ENCODE measurements at regions of chr14 and their contacts with region 1.

Region 1: DNA sequence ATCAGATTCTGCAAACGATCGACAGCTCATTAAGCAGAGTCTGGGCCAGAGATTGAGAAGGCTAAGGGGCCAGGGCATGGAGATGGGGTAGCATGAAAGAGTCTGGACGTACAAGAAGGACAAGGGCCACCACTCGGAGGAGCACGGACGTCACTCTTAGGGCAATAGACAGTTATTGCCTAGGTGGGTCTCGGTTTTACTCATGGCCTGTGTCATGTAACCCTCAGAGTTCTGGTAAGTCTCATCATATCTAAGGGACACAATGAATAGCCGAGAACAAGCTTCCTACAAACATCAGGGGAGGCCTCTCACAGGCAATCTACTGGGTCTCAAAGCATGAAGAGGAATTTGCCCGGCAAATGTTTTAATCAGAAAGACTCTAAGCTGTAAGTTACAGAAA is 30.4 kb upstream of the ITPK1 start:
- DNase-seq: no peak
- ATAC-seq: peak; percentile 85
- H3K4me3 ChIP-seq: no peak overlapping the region
- H3K27ac ChIP-seq: no peak overlapping the region
- H3K4me1 ChIP-seq: peaks cover 4% of the 10 kb centered on the region; the same call in 1 of the 2 replicates
- H3K27me3 ChIP-seq: no peaks in the 10 kb centered on the region
- CTCF ChIP-seq: no peak
- EP300 ChIP-seq: peak in 1 of 2 experiments; percentile 64; a peak in 1 of 4 replicates
- POLR2A ChIP-seq: no peak
- RAD21 ChIP-seq: no peak

Region 2: GRCh38 chr14:92670160-92670559 is 476.0 kb before region 1 on chr14:
- CTCF ChIA-PET with region 1: no interaction called
- POLR2A ChIA-PET with region 1: no interaction called
- RAD21 ChIA-PET with region 1: no interaction called
- SMC1A ChIA-PET with region 1: no interaction called
- in situ Hi-C with region 1: no loop called
- intact Hi-C with region 1: no loop called
- DNase-seq: no peak
- ATAC-seq: no peak
- H3K4me3 ChIP-seq: no peak overlapping the region
- H3K27ac ChIP-seq: peak overlapping the region; percentile 7; the same call in 1 of the 2 replicates
- H3K4me1 ChIP-seq: peaks cover 30% of the 10 kb centered on the region
- H3K27me3 ChIP-seq: no peaks in the 10 kb centered on the region
- CTCF ChIP-seq: peak in 2 of 3 experiments; percentile 3 to 33; a peak in 2 of 6 replicates
- EP300 ChIP-seq: no peak
- POLR2A ChIP-seq: no peak
- RAD21 ChIP-seq: peak; percentile 30; the same call in 1 of the 2 replicates

Region 3: GRCh38 chr14:92719890-92720323 is 426.2 kb before region 1 on chr14:
- CTCF ChIA-PET with region 1: no interaction called
- POLR2A ChIA-PET with region 1: no interaction called
- RAD21 ChIA-PET with region 1: no interaction called
- SMC1A ChIA-PET with region 1: no interaction called
- in situ Hi-C with region 1: no loop called
- intact Hi-C with region 1: no loop called
- DNase-seq: no peak
- ATAC-seq: no peak
- H3K4me3 ChIP-seq: no peak overlapping the region
- H3K27ac ChIP-seq: no peak overlapping the region
- H3K4me1 ChIP-seq: no peaks in the 10 kb centered on the region
- H3K27me3 ChIP-seq: no peaks in the 10 kb centered on the region
- CTCF ChIP-seq: no peak
- EP300 ChIP-seq: no peak
- POLR2A ChIP-seq: no peak
- RAD21 ChIP-seq: no peak

Region 4: DNA sequence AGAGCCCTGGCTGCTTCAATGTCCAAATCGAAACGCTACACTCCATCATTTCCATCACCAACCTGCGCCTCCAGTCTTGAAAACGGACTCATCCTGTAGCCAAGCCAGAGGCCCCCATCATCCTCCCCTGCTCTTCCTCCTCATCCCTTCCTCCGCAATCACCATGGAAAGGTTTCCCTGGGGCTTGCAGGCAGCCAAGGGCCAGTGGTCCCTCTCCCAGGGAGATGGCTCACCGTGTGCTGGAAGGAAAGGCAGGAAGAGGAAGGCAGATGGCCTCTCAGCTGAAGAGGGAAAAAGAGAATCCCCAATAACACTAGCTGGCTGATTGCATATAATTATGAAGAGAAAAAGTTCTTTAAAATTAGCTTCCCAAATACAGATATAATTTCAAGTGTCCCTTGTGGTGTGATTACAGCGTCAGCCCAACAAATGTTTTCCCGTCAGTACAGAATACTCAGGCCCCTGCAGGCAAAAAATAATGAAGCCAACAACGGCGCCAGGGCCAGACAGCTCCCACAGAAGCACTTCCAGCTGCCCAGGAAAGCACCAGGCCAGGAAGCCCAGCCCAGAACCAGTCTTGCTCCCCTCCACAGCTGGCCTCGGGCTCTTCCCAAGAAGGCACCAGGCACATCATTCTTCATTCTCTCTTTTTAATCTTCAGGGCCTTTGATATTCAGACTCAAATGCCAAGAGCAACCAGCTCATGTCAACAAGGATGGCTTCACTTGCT is 55.1 kb before region 1 on chr14:
- CTCF ChIA-PET with region 1: no interaction called
- POLR2A ChIA-PET with region 1: no interaction called
- RAD21 ChIA-PET with region 1: no interaction called
- SMC1A ChIA-PET with region 1: no interaction called
- in situ Hi-C with region 1: no loop called
- intact Hi-C with region 1: no loop called
- DNase-seq: no peak
- ATAC-seq: no peak
- H3K4me3 ChIP-seq: no peak overlapping the region
- H3K27ac ChIP-seq: no peak overlapping the region
- H3K4me1 ChIP-seq: peaks cover 19% of the 10 kb centered on the region
- H3K27me3 ChIP-seq: no peaks in the 10 kb centered on the region
- CTCF ChIP-seq: no peak
- EP300 ChIP-seq: no peak
- POLR2A ChIP-seq: no peak
- RAD21 ChIP-seq: no peak

Region 5: GRCh38 chr14:93101181-93101580 is 44.9 kb before region 1 on chr14:
- CTCF ChIA-PET with region 1: no interaction called
- POLR2A ChIA-PET with region 1: no interaction called
- RAD21 ChIA-PET with region 1: no interaction called
- SMC1A ChIA-PET with region 1: no interaction called
- in situ Hi-C with region 1: no loop called
- intact Hi-C with region 1: no loop called
- DNase-seq: no peak
- ATAC-seq: no peak
- H3K4me3 ChIP-seq: no peak overlapping the region
- H3K27ac ChIP-seq: no peak overlapping the region
- H3K4me1 ChIP-seq: peaks cover 22% of the 10 kb centered on the region
- H3K27me3 ChIP-seq: no peaks in the 10 kb centered on the region
- CTCF ChIP-seq: no peak
- EP300 ChIP-seq: no peak
- POLR2A ChIP-seq: no peak
- RAD21 ChIP-seq: no peak

Region 6: DNA sequence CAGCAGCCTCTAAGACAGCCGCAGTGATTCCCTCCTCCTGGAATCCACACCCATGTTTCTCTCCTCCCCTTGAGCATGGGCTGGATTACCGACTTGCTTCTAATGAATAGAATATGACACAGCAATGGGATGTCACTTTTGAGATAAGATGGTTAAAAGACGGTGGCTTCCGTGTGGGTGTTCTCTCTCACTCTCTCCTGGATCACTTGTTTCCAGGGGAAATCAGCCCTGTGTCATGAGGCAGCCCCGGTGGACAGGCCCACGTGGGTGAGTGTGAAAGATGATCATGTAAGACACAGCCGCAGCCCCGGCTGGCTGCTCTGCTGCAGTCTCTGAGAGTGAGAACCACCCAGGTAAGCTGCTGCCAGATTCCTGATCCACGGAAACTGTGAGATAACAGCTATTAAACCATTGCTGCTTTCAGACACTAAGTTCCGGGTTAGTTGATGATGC is 27.9 kb after region 1 on chr14:
- CTCF ChIA-PET with region 1: interaction called, 11 read pairs
- POLR2A ChIA-PET with region 1: no interaction called
- RAD21 ChIA-PET with region 1: interaction called, 4 read pairs
- SMC1A ChIA-PET with region 1: interaction called, 5 read pairs
- in situ Hi-C with region 1: no loop called
- intact Hi-C with region 1: no loop called
- DNase-seq: no peak
- ATAC-seq: peak; percentile 42
- H3K4me3 ChIP-seq: no peak overlapping the region
- H3K27ac ChIP-seq: no peak overlapping the region
- H3K4me1 ChIP-seq: no peaks in the 10 kb centered on the region
- H3K27me3 ChIP-seq: no peaks in the 10 kb centered on the region
- CTCF ChIP-seq: no peak
- EP300 ChIP-seq: no peak
- POLR2A ChIP-seq: no peak
- RAD21 ChIP-seq: no peak